Activated CD4-positive, alpha-beta memory T cell treated with anti-CD3 and anti-CD28 coated beads for 36 hours (primary cell): ENCODE measurements at regions of chr17 and their contacts with region 1.

Region 1: DNA sequence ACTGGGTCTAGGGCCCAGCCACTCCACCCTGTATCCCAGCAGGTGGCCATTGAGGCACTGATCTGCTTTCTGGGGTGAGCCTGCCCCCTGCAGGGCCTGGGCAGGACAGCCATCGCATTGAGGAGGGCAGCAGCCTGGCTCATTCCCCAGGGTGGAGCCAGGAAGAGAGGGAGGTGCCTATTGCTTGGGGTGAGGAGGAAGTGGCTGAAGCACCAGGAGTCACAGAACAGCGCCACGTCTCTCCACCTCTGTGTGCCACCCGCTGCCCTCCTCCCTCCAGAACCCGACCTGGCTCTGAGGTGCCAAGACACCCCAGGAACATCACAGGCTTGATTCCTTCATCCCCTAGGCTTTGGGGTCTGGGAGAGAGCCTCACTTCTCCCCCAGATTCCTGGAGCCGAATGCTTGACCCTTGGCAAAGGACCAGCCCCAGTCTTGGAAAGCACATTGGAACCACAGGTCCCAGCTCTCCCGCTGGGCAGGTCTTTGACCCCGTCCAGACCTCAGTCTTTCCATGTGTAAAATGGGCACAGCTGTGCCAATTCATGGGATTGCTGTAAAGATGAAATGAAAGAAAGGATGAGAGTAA is 7.2 kb upstream of the KRT36 start:
- DNase-seq: peak; percentile 89
- H3K4me3 Mint-ChIP-seq: no peak overlapping the region
- H3K27ac Mint-ChIP-seq: no peak overlapping the region
- H3K4me1 Mint-ChIP-seq: peaks cover 12% of the 10 kb centered on the region
- H3K27me3 Mint-ChIP-seq: no peaks in the 10 kb centered on the region

Region 2: GRCh38 chr17:40803617-40804082 is 693.3 kb before region 1 on chr17:
- CTCF ChIA-PET with region 1: no interaction called
- POLR2A ChIA-PET with region 1: no interaction called
- intact Hi-C with region 1: loop called (anchors 5 kb)
- DNase-seq: peak; percentile 86
- H3K4me3 Mint-ChIP-seq: no peak overlapping the region
- H3K27ac Mint-ChIP-seq: no peak overlapping the region
- H3K4me1 Mint-ChIP-seq: peaks cover 2% of the 10 kb centered on the region
- H3K27me3 Mint-ChIP-seq: peaks cover 36% of the 10 kb centered on the region

Region 3: GRCh38 chr17:40909351-40909750 is 587.6 kb before region 1 on chr17:
- CTCF ChIA-PET with region 1: interaction called, 6 read pairs
- POLR2A ChIA-PET with region 1: no interaction called
- intact Hi-C with region 1: loop called (anchors 2 kb)
- DNase-seq: peak; percentile 71
- H3K4me3 Mint-ChIP-seq: no peak overlapping the region
- H3K27ac Mint-ChIP-seq: no peak overlapping the region
- H3K4me1 Mint-ChIP-seq: no peaks in the 10 kb centered on the region
- H3K27me3 Mint-ChIP-seq: peaks cover 24% of the 10 kb centered on the region

Region 4: GRCh38 chr17:41403798-41404671 is 92.9 kb before region 1 on chr17:
- CTCF ChIA-PET with region 1: interaction called, 4 read pairs
- POLR2A ChIA-PET with region 1: no interaction called
- intact Hi-C with region 1: loop called (anchors 10 kb)
- DNase-seq: peak; percentile 84
- H3K4me3 Mint-ChIP-seq: peak overlapping the region; percentile 17
- H3K27ac Mint-ChIP-seq: peak overlapping the region; percentile 86
- H3K4me1 Mint-ChIP-seq: peaks cover 42% of the 10 kb centered on the region
- H3K27me3 Mint-ChIP-seq: no peaks in the 10 kb centered on the region